Stomach (tissue), 19 donors: ENCODE measurements at regions of chr19 and their contacts with region 1.

Region 1: DNA sequence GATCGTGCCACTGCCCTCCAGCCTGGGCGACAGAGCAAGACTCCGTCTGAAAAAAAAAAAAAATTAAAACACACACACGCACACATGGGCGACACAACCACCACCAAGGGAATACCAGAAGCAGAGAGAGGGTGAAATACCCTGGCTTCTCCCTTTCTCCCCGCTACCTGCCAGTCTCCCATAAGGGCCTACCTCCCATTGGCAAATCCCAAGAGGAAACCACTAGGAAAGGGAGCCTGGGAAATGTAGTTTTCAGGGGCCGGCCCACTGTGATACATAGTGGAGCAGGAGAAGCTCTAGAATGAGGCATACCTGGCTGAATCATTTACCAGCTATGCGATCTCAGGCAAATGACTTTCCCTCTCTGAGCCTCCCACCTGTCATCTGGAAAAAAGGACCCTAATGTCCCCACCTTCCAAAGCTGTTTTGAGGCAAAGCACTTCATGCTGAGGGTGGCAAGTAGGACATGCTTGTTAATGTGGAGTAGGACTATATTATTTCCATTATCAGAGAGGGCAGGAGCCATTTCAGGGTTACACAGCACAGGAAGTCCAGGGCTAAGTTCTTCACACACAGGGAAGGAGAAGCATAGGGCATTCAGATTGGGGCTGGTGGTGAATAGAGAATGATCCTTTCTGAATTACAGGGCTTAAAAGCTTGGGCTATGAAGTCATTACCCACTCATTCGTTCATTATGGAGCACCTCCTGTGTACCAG is 14.3 kb upstream of the HNRNPUL1 start:
- DNase-seq: no peak
- H3K4me3 ChIP-seq: no peak overlapping the region
- H3K27ac ChIP-seq: no peak overlapping the region
- H3K4me1 ChIP-seq: no peaks in the 10 kb centered on the region
- H3K27me3 ChIP-seq: no peaks in the 10 kb centered on the region
- CTCF ChIP-seq: no peak
- EP300 ChIP-seq: no peak
- POLR2A ChIP-seq: no peak

Region 2: GRCh38 chr19:41123716-41124294 is 126.1 kb before region 1 on chr19:
- intact Hi-C with region 1: loop called (anchors 10 kb)
- DNase-seq: no peak
- H3K4me3 ChIP-seq: no peak overlapping the region
- H3K27ac ChIP-seq: no peak overlapping the region
- H3K4me1 ChIP-seq: peaks cover 5 to 13% (median 9%) of the 10 kb centered on the region in 4 donors
- H3K27me3 ChIP-seq: peaks cover 0 to 9% (median 0%) of the 10 kb centered on the region in 3 donors
- CTCF ChIP-seq: no peak
- EP300 ChIP-seq: no peak
- POLR2A ChIP-seq: no peak